AG04450 (cell line): ENCODE measurements at regions of chr2 and their contacts with region 1.

Region 1: DNA sequence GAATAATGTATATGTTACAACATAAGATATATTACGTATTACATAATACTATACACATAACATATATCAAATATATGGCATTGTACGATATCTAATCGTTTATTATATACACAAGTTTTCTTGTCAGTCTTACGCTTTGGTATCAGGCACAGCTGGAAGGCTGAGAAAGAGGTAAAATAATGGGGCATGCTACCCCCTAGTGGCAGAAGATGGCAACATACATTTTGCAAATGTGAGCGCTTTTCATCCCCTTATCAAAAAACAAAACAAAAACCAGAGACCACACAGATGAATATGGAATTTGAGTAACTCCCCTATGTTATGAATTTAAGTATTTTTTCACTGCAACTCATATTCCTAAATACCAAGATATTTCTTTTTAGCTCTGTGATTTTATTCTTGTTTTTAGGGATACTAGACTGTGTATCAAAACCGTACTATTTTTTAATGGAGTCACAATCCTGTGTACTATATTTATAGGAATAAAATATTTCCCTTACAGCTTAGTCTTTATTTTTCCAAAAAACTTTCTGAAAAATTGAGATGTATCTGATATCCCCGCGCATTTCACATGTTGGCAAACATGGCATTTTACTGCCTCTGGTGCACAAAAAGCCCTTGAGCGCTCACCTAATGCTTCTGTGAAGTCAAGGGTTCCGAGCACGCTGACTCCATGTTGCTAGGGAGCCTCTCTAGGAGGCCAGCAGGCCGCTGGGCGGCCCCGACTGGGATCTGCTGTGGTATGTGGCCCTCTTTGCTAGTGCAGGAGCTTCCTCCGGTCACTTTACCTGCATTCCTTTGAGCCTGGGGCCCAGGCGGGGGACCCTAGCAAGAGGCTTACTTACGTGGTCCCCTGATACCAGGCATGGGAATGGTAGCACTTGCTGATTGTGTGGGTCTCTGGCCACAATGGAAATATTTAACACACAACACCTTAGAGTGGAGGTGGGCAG is 62.5 kb downstream of the SLC4A3 start:
- DNase-seq: no peak
- H3K4me3 ChIP-seq: no peak overlapping the region
- H3K27ac ChIP-seq: no peak overlapping the region
- H3K27me3 ChIP-seq: peaks cover 3% of the 10 kb centered on the region
- CTCF ChIP-seq: peak; percentile 73

Region 2: GRCh38 chr2:219484343-219485200 is 205.4 kb before region 1 on chr2:
- CTCF ChIA-PET with region 1: no interaction called
- POLR2A ChIA-PET with region 1: no interaction called
- DNase-seq: no peak
- H3K4me3 ChIP-seq: no peak overlapping the region
- H3K27ac ChIP-seq: no peak overlapping the region
- H3K27me3 ChIP-seq: no peaks in the 10 kb centered on the region
- CTCF ChIP-seq: no peak

Region 3: DNA sequence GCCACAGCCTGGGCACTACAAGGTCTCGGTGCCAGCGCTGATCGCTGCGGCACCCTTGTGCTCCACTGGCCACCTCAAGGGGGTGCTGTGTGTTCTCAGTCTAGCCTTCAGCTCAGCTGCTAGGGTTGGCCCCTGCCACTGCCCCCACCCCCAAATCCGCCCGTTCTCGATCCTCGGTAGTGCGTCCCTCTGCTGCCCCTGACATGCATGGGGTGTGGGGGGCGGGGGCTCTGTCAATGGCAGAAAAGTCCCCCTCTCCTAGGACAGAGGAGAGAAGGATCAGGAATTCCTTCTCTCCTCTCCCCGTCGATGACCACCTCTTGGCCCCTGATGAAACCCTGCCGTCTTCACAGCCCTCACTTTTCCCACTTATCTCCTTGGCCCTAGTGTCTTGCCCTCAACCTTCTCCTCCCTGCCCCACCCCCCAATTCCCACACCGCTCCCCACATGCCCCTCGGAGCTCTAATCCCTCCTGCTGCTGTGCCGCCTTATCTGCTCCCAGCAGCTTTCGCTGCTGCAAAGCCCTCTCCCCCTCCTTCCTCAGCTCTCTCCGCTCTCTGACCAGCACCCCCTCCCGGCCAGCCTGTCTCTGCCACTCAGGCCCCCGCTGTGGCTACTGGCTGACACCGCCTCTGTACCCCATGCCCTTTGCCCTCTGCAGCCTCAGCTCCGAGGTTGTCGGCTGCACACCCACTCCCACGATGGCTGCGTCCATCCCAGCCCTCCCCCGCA is 180.0 kb before region 1 on chr2:
- CTCF ChIA-PET with region 1: no interaction called
- POLR2A ChIA-PET with region 1: no interaction called
- DNase-seq: no peak
- H3K4me3 ChIP-seq: peak overlapping the region; percentile 37
- H3K27ac ChIP-seq: no peak overlapping the region
- H3K27me3 ChIP-seq: peaks cover 46% of the 10 kb centered on the region
- CTCF ChIP-seq: peak; percentile 79

Region 4: GRCh38 chr2:219543601-219544358 is 146.2 kb before region 1 on chr2 and contains the starts of genes CHPF and TMEM198:
- CTCF ChIA-PET with region 1: interaction called, 38 read pairs
- POLR2A ChIA-PET with region 1: no interaction called
- DNase-seq: peak; percentile 95
- H3K4me3 ChIP-seq: peak within 1 kb of the TSS; percentile 75
- H3K27ac ChIP-seq: peak within 1 kb of the TSS; percentile 78
- H3K27me3 ChIP-seq: no peaks in the 10 kb centered on the region
- CTCF ChIP-seq: no peak
- polyA plus RNA-seq, gene CHPF: 24.4 and 37.2 TPM in 2 replicates
- polyA plus RNA-seq, gene TMEM198: 0.83 and 1.2 TPM in 2 replicates

Region 5: GRCh38 chr2:219609149-219609750 is 80.7 kb before region 1 on chr2:
- CTCF ChIA-PET with region 1: no interaction called
- POLR2A ChIA-PET with region 1: no interaction called
- DNase-seq: no peak
- H3K4me3 ChIP-seq: no peak overlapping the region
- H3K27ac ChIP-seq: no peak overlapping the region
- H3K27me3 ChIP-seq: no peaks in the 10 kb centered on the region
- CTCF ChIP-seq: no peak

Region 6: DNA sequence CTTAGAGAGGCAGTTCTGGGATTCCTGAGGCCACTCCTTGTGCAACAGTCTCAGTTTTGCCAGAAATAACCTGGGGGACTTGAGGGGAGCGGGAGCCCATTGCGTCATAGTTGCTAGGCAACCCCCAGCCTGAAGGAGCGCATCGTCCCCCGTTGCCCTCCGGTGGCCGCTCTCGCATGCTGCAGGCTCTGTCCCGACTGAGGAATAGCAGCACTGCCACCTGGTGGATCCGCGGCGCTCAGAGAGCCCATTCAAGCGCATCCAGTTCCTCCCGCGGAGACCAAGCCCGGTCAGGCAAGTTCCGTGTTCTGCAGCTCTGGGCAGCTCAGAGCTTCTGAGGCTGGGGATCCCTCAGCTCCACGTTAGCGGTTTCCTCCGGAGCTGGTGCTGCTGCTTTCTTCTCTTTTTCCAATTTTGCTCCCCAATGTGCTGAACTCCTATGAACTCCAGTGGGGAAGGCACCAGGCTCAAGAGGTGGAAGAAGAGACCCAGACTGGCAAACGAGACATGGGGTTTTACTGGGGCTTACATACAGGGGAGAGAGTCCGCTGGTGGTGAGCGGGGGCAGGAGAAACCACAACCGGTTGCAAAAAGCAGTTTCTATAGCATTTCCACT is 47.4 kb before region 1 on chr2:
- CTCF ChIA-PET with region 1: interaction called, 45 read pairs
- POLR2A ChIA-PET with region 1: interaction called, 3 read pairs
- DNase-seq: peak; percentile 87
- H3K4me3 ChIP-seq: no peak overlapping the region
- H3K27ac ChIP-seq: no peak overlapping the region
- H3K27me3 ChIP-seq: no peaks in the 10 kb centered on the region
- CTCF ChIP-seq: peak; percentile 100

Region 7: DNA sequence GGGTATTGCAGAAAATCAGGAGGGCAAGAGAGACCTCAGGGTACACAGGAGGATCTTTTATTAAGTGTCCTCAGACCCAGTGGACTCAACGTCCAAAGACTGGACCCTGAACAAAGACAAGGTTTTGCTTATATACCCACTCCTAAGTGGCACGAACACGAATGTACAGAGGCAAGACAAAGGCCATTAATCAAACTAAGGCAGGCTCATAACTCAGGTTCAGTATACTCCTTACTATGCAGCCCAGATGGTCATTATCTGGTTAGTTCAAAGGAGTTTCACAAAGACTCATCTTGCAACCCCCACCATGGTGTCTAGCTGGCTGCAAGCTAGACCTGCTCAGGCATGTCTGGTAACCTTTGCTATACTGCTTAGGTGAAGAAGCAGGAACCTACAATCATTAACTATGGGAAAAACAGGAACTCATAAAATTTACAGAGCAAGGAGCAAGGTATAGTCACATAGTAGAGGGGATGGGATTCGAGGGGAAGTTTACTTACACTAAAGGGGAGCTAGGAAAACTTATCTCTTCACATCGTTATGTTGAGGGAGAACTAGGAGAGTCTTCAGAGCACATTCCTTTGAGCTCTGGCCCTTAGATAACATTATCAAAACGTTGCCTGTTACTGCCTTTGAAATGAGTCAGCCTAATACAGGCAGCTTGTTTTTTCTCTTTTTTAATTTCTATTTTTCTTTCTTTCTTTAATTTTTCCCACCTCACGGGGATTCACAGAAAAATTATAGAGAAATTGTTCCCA is 28.6 kb before region 1 on chr2:
- CTCF ChIA-PET with region 1: interaction called, 12 read pairs
- POLR2A ChIA-PET with region 1: no interaction called
- DNase-seq: no peak
- H3K4me3 ChIP-seq: no peak overlapping the region
- H3K27ac ChIP-seq: no peak overlapping the region
- H3K27me3 ChIP-seq: peaks cover 5% of the 10 kb centered on the region
- CTCF ChIP-seq: no peak

Region 8: DNA sequence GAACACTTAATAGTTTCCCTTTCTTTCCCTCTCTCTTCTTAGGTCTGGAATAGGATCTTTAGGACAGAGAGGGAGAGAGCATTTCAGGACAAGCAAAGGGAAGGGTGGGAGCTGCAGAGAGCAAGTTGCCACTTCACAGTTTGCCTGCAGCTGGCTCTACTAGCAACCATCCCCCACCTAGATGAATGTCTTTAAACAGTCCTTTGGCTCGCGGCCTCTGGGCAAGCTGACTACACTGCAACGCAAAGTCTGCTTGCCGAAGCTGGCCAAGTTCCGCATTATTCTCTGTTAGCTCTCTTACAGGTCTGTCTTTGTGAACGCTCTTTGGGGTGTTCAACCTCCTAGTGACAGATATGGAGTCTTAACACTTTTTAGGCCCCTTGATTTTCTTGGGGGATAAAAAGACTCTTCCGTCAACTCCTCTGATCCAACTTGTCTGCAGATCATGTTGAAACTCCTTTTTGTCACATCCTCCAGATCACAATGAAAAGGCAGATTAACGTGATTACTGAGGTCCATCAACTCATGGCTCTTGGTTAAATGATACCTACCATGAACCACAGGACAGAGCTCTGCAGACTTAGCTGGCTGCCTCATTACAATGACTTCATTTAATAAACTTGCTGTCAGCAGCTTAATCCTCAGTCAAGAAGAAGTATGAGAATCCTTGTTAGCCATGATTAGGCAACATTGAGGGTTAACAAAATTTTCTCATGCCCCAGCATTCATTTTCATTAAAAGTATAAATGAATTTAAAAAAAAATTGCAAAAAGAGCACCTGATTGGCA is 12.1 kb after region 1 on chr2:
- CTCF ChIA-PET with region 1: interaction called, 55 read pairs
- POLR2A ChIA-PET with region 1: no interaction called
- DNase-seq: no peak
- H3K4me3 ChIP-seq: no peak overlapping the region
- H3K27ac ChIP-seq: no peak overlapping the region
- H3K27me3 ChIP-seq: peaks cover 22% of the 10 kb centered on the region
- CTCF ChIP-seq: no peak